Right ventricle myocardium superior (tissue), 1 donor: ENCODE measurements at regions of chr20 and their contacts with region 1.

Region 1: GRCh38 chr20:17536944-17537444 is 5.8 kb upstream of the BFSP1 start:
- DNase-seq: peak; percentile 60
- ATAC-seq: peak; percentile 98

Region 2: GRCh38 chr20:17442588-17442987 is 94.4 kb before region 1 on chr20:
- intact Hi-C with region 1: no loop called
- DNase-seq: no peak
- ATAC-seq: no peak

Region 3: DNA sequence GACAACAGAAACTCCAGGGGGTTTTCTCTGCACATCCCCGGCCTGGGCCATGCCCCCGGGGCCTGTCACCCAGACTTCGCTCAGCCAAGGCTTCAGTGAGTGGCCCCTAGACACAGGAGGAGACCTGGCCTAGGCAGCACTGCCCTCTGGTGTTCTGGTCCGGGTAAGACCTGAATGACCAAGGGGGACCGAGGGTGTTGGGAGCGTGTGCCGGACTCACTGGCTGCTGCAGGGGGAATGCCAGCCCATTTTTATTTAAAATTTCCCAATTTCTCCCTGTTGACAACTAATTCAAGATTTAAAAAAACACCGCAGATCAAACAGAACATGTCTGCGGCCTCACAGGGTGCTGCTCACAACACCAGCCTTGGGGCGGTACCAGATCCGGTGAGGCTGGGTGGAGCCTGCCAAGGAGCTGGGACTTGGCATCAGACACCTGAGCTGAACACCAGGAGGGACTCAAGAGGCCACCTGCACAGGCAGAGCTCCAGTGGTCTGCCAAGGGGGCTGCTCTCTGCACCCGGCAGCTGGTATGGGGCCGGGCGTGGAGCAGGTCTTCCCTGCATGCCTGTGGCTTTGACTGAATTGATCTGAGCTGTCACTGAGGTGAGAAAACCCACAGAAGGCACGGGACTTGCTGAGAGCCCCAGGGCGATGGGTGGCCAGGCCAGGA is 80.7 kb after region 1 on chr20:
- intact Hi-C with region 1: loop called (anchors 2 kb)
- DNase-seq: peak; percentile 75
- ATAC-seq: peak; percentile 62

Region 4: DNA sequence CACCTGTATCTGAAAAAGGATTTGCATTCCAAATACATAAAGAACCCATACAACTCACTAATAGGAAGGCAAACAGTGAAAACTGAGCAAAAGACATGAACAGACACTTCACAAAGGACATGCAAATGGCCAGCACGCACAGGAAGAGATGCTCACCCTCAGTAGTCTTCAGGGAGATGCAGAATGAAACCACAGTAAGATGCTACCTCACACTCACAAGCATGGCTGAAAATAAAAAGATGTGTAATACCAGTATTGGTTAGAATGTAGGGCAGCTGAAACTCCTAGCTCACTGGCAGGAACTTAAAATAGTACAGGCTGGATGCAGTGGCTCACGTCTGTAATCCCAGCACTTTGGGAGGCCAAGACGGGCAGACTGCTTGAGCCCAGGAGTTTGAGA is 367.0 kb after region 1 on chr20:
- intact Hi-C with region 1: loop called (anchors 10 kb)
- DNase-seq: no peak
- ATAC-seq: no peak